ENCODE measurements at regions of chr13 and their contacts with region 1.

Region 1: DNA sequence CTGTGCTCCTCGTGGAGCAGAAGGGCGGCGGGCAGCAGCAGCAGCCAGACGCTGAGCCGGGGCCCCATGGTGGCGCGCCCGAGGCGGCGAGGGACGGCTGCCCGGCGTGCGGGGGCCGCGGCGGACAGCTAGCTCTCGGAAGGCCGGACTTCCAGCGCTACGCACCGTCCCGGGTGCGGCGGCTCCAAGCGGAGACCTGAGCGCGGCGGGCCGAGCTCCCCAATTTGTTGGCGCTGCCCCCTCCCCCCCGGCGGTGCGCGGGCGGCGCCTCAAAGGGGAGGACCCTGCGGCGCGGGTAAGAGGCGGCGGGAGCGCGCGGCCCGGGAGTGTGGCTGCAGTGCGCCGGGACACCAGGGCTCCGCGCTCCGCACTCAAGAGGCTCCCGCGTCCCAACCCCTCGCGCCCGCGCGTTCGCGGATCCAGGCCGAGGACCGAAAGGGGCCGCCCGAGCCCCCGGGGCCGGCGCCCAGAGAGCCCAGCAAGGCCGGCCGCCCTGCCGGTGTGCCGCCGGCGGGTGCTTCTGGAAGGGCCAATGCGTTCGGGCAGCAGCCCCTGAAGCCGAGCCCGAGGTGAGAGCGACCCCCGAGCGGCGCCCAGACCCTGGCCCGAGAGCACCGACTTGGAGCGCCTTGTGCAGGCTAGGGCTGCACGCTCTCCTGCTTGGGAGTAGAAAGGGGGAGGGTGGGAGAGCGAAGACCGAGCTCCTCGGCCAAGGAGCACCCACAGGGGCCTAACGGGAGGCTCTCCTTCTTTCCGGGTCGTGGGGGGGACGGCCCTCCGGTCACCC is at the starts of genes COL4A1 and COL4A2:
- DNase-seq: no peak
- H3K4me3 ChIP-seq: peak within 1 kb of the TSS; percentile 44 to 93 (median 76)
- H3K27ac ChIP-seq: peak within 1 kb of the TSS; percentile 44; the same call in 1 of the 2 replicates
- H3K4me1 ChIP-seq: peaks cover 5 to 9% (median 7%) of the 10 kb centered on the region in 4 experiments; a peak in 5 of 7 replicates
- H3K27me3 ChIP-seq: peaks cover 0 to 18% (median 10%) of the 10 kb centered on the region in 4 experiments; a peak in 5 of 7 replicates
- CTCF ChIP-seq: no peak
- EP300 ChIP-seq: no peak
- POLR2A ChIP-seq: peak; percentile 56 to 88
- RAD21 ChIP-seq: 0 out of 4 replicates have a peak, but pooled peaks of 1 of the 2 experiments have one; percentile 4
- total RNA-seq, gene COL4A1: 82.0 and 91.0 TPM in 2 replicates
- total RNA-seq, gene COL4A2: 77.0 and 80.4 TPM in 2 replicates

Region 2: GRCh38 chr13:110209950-110210603 is 97.1 kb before region 1 on chr13:
- CTCF ChIA-PET with region 1: no interaction called
- POLR2A ChIA-PET with region 1: no interaction called
- DNase-seq: no peak
- H3K4me3 ChIP-seq: no peak overlapping the region
- H3K27ac ChIP-seq: no peak overlapping the region
- H3K4me1 ChIP-seq: peaks cover 0 to 2% (median 0%) of the 10 kb centered on the region in 4 experiments; a peak in 1 of 7 replicates
- H3K27me3 ChIP-seq: no peaks in the 10 kb centered on the region
- CTCF ChIP-seq: no peak
- EP300 ChIP-seq: no peak
- POLR2A ChIP-seq: no peak
- RAD21 ChIP-seq: no peak

Region 3: DNA sequence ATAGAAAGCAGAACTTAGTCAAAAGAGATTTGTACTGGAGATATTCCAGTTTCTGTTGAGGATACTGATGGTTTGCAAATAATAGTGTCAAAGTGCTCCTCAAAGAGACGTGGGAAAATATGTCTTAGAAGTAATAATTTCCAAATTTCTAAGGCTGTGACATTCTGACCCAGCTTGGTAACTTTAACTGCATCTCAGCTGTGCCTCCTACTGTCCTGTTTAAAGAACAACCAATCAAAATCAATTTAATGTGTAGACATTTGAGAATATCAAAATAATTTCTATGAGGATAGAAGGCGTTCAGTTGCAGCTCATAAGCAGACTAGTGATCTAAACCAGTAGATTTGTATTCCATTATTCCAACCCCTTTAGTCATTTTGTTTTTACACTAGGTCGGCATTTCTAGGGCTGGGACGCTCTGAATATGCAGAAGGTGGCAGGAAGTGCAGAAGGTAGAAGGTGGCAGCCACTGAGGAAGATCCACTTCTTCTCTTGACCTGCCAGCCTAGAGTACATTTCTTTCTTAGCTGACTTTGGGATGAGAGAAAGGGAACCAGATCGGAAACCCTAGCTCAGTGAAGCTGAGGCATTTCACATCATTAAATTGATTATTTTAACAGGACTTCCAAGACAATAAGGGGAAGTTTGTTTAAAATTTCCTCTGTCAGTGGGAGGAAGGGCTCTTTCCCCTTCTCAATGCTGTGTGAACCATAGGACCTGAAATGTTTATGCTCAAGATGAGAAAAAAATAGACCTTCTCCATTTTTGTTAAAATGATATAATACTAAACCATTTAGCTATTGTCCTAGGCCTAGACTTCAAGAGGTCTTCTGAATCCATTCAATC is 67.7 kb before region 1 on chr13:
- CTCF ChIA-PET with region 1: no interaction called
- POLR2A ChIA-PET with region 1: no interaction called
- DNase-seq: peak in 1 of 2 experiments; percentile 19
- H3K4me3 ChIP-seq: no peak overlapping the region
- H3K27ac ChIP-seq: no peak overlapping the region
- H3K4me1 ChIP-seq: peaks cover 0 to 8% (median under 1%) of the 10 kb centered on the region in 4 experiments; a peak in 2 of 7 replicates
- H3K27me3 ChIP-seq: no peaks in the 10 kb centered on the region
- CTCF ChIP-seq: no peak
- EP300 ChIP-seq: no peak
- POLR2A ChIP-seq: no peak
- RAD21 ChIP-seq: no peak

Region 4: GRCh38 chr13:110265682-110266430 is 41.3 kb before region 1 on chr13:
- CTCF ChIA-PET with region 1: interaction called, 18 read pairs
- POLR2A ChIA-PET with region 1: interaction called, 4 read pairs
- DNase-seq: peak in 1 of 2 experiments; percentile 49
- H3K4me3 ChIP-seq: no peak overlapping the region
- H3K27ac ChIP-seq: no peak overlapping the region
- H3K4me1 ChIP-seq: peaks cover 14 to 37% (median 19%) of the 10 kb centered on the region in 4 experiments
- H3K27me3 ChIP-seq: no peaks in the 10 kb centered on the region
- CTCF ChIP-seq: no peak
- EP300 ChIP-seq: no peak
- POLR2A ChIP-seq: no peak
- RAD21 ChIP-seq: no peak

Region 5: GRCh38 chr13:110422913-110423688 is 115.9 kb after region 1 on chr13:
- CTCF ChIA-PET with region 1: no interaction called
- POLR2A ChIA-PET with region 1: no interaction called
- DNase-seq: no peak
- H3K4me3 ChIP-seq: no peak overlapping the region
- H3K27ac ChIP-seq: no peak overlapping the region
- H3K4me1 ChIP-seq: no peaks in the 10 kb centered on the region
- H3K27me3 ChIP-seq: no peaks in the 10 kb centered on the region
- CTCF ChIP-seq: no peak
- EP300 ChIP-seq: no peak
- POLR2A ChIP-seq: no peak
- RAD21 ChIP-seq: no peak